GM12878 (cell line): ENCODE measurements at regions of chr1 and their contacts with region 1.

Region 1: GRCh38 chr1:179002552-179003345 is 22.9 kb upstream of the FAM20B start:
- DNase-seq: no peak
- ATAC-seq: peak; percentile 95
- H3K4me3 ChIP-seq: no peak overlapping the region
- H3K27ac ChIP-seq: no peak overlapping the region
- H3K4me1 ChIP-seq: no peaks in the 10 kb centered on the region
- H3K27me3 ChIP-seq: no peaks in the 10 kb centered on the region
- CTCF ChIP-seq: peak; percentile 95 to 97 (median 96); a peak in 5 of 6 replicates
- EP300 ChIP-seq: no peak
- POLR2A ChIP-seq: no peak
- RAD21 ChIP-seq: peak; percentile 98

Region 2: GRCh38 chr1:178310685-178311105 is 692.1 kb before region 1 on chr1:
- CTCF ChIA-PET with region 1: interaction called, 9 read pairs
- POLR2A ChIA-PET with region 1: no interaction called
- RAD21 ChIA-PET with region 1: interaction called, 5 read pairs
- SMC1A ChIA-PET with region 1: interaction called, 7 read pairs
- in situ Hi-C with region 1: no loop called
- intact Hi-C with region 1: loop called (anchors 2 kb)
- DNase-seq: peak; percentile 20
- ATAC-seq: peak; percentile 81
- H3K4me3 ChIP-seq: no peak overlapping the region
- H3K27ac ChIP-seq: no peak overlapping the region
- H3K4me1 ChIP-seq: no peaks in the 10 kb centered on the region
- H3K27me3 ChIP-seq: no peaks in the 10 kb centered on the region
- CTCF ChIP-seq: peak; percentile 57 to 71 (median 69)
- EP300 ChIP-seq: no peak
- POLR2A ChIP-seq: no peak
- RAD21 ChIP-seq: peak; percentile 64

Region 3: DNA sequence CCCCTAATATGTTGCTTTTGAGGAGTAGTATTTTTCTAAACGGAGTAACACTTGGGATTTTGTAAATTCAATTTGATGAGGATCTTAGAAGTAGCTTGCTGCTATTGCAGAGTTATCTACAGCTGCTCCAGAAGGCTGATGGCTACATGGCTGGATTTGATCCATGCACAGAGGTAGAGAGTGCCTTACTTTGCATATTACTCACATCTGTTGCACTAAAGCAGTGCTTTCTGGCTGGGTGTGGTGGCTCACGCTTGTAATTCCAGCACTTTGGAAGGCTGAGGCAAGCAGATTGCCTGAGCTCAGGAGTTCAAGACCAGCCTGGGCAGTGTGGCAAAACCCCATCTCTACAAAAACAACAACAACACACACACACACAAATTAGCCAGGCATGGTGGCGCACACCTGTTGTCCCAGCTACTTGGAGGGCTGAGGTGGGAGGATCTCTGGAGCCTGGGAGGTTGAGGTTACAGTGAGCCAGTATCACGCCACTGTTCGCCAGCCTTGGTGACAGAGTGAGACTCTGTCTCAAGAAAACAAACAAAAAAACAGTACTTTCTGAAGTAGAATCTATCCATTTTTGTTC is 253.1 kb before region 1 on chr1:
- CTCF ChIA-PET with region 1: interaction called, 8 read pairs
- POLR2A ChIA-PET with region 1: no interaction called
- RAD21 ChIA-PET with region 1: interaction called, 4 read pairs
- SMC1A ChIA-PET with region 1: interaction called, 14 read pairs
- in situ Hi-C with region 1: no loop called
- intact Hi-C with region 1: no loop called
- DNase-seq: no peak
- ATAC-seq: no peak
- H3K4me3 ChIP-seq: no peak overlapping the region
- H3K27ac ChIP-seq: no peak overlapping the region
- H3K4me1 ChIP-seq: no peaks in the 10 kb centered on the region
- H3K27me3 ChIP-seq: no peaks in the 10 kb centered on the region
- CTCF ChIP-seq: no peak
- EP300 ChIP-seq: no peak
- POLR2A ChIP-seq: no peak
- RAD21 ChIP-seq: no peak

Region 4: DNA sequence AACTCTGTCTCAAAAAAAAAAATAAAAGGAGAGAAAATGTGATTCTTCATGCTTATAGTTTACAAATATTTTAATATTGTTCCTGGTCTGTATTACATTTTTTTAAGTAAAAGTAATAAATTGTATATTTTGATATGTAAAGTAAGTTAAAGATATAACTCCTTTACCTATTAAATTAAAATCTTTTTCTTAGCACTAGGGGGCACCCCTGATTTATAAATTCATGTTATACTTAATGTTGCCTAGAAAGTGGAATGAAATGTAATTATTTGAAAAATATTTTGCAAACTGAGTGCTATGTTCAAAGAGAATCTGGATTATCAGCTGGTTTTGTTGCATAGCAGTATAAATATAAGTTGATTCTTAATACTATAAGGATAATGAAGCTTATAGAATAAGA is 228.5 kb before region 1 on chr1:
- CTCF ChIA-PET with region 1: interaction called, 64 read pairs
- POLR2A ChIA-PET with region 1: no interaction called
- RAD21 ChIA-PET with region 1: interaction called, 11 read pairs
- SMC1A ChIA-PET with region 1: interaction called, 34 read pairs
- in situ Hi-C with region 1: loop called (anchors 5 kb)
- intact Hi-C with region 1: loop called (anchors 1 kb)
- DNase-seq: no peak
- ATAC-seq: no peak
- H3K4me3 ChIP-seq: no peak overlapping the region
- H3K27ac ChIP-seq: no peak overlapping the region
- H3K4me1 ChIP-seq: no peaks in the 10 kb centered on the region
- H3K27me3 ChIP-seq: no peaks in the 10 kb centered on the region
- CTCF ChIP-seq: peak in 1 of 3 experiments; percentile 17; a peak in 1 of 6 replicates
- EP300 ChIP-seq: no peak
- POLR2A ChIP-seq: no peak
- RAD21 ChIP-seq: 0 out of 2 replicates have a peak, but pooled peaks have one; percentile 33

Region 5: GRCh38 chr1:178810585-178810984 is 192.2 kb before region 1 on chr1:
- CTCF ChIA-PET with region 1: interaction called, 14 read pairs
- POLR2A ChIA-PET with region 1: no interaction called
- RAD21 ChIA-PET with region 1: no interaction called
- SMC1A ChIA-PET with region 1: interaction called, 14 read pairs
- in situ Hi-C with region 1: no loop called
- intact Hi-C with region 1: loop called (anchors 2 kb)
- DNase-seq: no peak
- ATAC-seq: no peak
- H3K4me3 ChIP-seq: no peak overlapping the region
- H3K27ac ChIP-seq: no peak overlapping the region
- H3K4me1 ChIP-seq: no peaks in the 10 kb centered on the region
- H3K27me3 ChIP-seq: no peaks in the 10 kb centered on the region
- CTCF ChIP-seq: no peak
- EP300 ChIP-seq: no peak
- POLR2A ChIP-seq: no peak
- RAD21 ChIP-seq: no peak

Region 6: GRCh38 chr1:178870944-178871343 is 131.8 kb before region 1 on chr1 and contains the start of gene ANGPTL1:
- CTCF ChIA-PET with region 1: interaction called, 13 read pairs
- POLR2A ChIA-PET with region 1: no interaction called
- RAD21 ChIA-PET with region 1: interaction called, 4 read pairs
- SMC1A ChIA-PET with region 1: interaction called, 5 read pairs
- in situ Hi-C with region 1: no loop called
- intact Hi-C with region 1: no loop called
- DNase-seq: no peak
- ATAC-seq: no peak
- H3K4me3 ChIP-seq: no peak within 1 kb of the TSS
- H3K27ac ChIP-seq: no peak within 1 kb of the TSS
- H3K4me1 ChIP-seq: no peaks in the 10 kb centered on the region
- H3K27me3 ChIP-seq: no peaks in the 10 kb centered on the region
- CTCF ChIP-seq: no peak
- EP300 ChIP-seq: no peak
- POLR2A ChIP-seq: no peak
- RAD21 ChIP-seq: no peak
- polyA plus RNA-seq, gene ANGPTL1: not detected

Region 7: DNA sequence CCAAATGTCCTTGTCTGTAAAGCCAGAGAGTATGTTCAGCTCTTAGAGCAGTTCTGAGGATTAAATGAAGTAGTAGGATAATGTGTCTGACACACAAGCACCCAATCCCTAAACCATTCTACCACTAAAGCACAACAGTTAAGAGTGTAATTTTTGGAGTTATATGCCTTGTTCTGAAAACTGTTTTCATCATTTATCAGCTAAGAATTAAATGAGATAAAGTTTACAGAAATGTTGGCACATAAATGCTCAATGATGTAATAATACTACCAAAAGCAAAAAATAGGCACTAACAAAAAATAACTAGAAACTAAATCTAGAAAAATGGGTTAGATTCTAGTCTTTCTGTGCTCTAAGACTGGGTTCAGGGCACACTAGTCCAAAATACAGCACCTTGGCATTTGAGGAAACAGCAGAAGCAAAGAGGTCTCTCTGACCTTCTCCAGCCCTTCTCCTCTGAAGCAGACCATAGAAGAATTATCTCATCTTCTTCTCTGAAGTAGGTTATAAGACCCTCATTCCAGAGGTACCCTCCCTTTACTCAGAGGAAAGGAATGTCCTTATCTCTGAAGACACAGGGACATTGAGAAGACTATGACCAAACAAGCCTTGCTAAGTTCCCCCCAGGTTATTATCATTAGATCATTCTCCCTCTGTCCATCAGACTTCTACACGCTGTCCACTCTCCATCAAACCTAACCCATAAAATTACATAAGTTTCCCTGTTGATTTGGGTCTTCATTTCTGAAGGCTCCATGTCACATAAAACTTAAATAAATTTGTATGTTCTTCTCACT is 206.1 kb after region 1 on chr1:
- CTCF ChIA-PET with region 1: no interaction called
- POLR2A ChIA-PET with region 1: no interaction called
- RAD21 ChIA-PET with region 1: no interaction called
- SMC1A ChIA-PET with region 1: no interaction called
- in situ Hi-C with region 1: no loop called
- intact Hi-C with region 1: no loop called
- DNase-seq: no peak
- ATAC-seq: no peak
- H3K4me3 ChIP-seq: no peak overlapping the region
- H3K27ac ChIP-seq: no peak overlapping the region
- H3K4me1 ChIP-seq: no peaks in the 10 kb centered on the region
- H3K27me3 ChIP-seq: no peaks in the 10 kb centered on the region
- CTCF ChIP-seq: no peak
- EP300 ChIP-seq: no peak
- POLR2A ChIP-seq: no peak
- RAD21 ChIP-seq: no peak

Region 8: GRCh38 chr1:179365320-179366092 is 362.8 kb after region 1 on chr1 and contains the start of gene AXDND1:
- CTCF ChIA-PET with region 1: interaction called, 10 read pairs
- POLR2A ChIA-PET with region 1: interaction called, 3 read pairs
- RAD21 ChIA-PET with region 1: no interaction called
- SMC1A ChIA-PET with region 1: interaction called, 5 read pairs
- in situ Hi-C with region 1: no loop called
- intact Hi-C with region 1: no loop called
- DNase-seq: peak; percentile 70
- ATAC-seq: peak; percentile 96
- H3K4me3 ChIP-seq: peak within 1 kb of the TSS; percentile 79
- H3K27ac ChIP-seq: peak within 1 kb of the TSS; percentile 97
- H3K4me1 ChIP-seq: no peaks in the 10 kb centered on the region; the same call in 1 of the 2 replicates
- H3K27me3 ChIP-seq: 0 out of 4 replicates have a peak, but pooled peaks cover 0 to 2% of the 10 kb centered on the region in 2 experiments
- CTCF ChIP-seq: peak in 1 of 3 experiments; percentile 6; a peak in 1 of 6 replicates
- EP300 ChIP-seq: no peak
- POLR2A ChIP-seq: peak; percentile 67
- RAD21 ChIP-seq: no peak
- polyA plus RNA-seq, gene AXDND1: 0.16 to 0.27 TPM